ENCODE measurements at regions of chr19 and their contacts with region 1.

Region 1: DNA sequence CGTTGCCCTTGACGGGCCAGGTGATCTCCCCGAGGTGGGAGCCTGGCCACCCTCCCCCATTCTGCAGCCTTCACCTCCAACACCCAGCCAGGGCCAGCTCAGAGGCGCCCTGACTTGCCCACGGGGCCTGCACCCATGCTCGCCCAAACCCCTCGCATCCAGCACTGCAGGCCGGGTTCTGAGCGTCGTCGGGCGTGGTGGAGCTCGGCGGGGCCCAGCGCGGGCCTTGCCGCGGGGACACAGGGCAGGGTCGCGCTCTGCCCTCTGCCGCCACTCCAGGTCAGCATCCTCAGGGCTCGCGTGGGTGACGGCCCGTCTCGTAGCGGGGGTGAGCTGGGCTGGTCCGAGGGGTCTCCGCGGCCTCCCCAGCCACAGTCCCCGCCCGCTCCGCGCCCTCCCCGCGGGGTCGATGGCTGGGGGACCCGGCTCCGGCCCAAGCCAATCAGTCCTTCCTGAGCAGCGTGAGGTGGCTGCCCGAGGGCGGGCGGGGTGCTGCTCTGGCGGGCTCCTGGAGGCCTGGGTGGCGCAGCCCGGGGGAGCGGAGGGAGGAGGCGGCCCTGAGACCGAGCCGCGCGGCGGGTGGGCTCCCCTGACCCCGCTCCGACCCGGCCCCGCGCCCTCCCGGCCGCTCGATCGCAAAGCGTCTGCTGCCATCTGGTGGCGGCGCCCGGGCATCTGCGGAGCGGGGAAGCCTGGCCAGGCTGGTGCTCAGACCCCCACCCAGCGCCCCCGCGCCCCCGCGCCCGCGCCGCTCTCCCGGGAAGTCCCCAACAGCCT is 61.4 kb downstream of the CCNE1 start:
- DNase-seq: peak in 34 of 35 experiments; percentile 20 to 81 (median 56)
- ATAC-seq: peak; percentile 80 to 91 (median 84)
- H3K4me3 ChIP-seq: peak overlapping the region in 1 of 2 donors; percentile 51
- H3K4me3 Mint-ChIP-seq: peak overlapping the region; percentile 62 to 70 (median 63)
- H3K27ac ChIP-seq: no peak overlapping the region
- H3K27ac Mint-ChIP-seq: no peak overlapping the region
- H3K4me1 ChIP-seq: peaks cover 0 to 21% of the 10 kb centered on the region in 2 experiments
- H3K4me1 Mint-ChIP-seq: peaks cover 7 to 18% (median 16%) of the 10 kb centered on the region in 3 donors
- H3K27me3 ChIP-seq: peaks cover 2 to 41% of the 10 kb centered on the region in 2 experiments
- H3K27me3 Mint-ChIP-seq: peaks cover 7 to 26% of the 10 kb centered on the region in 2 donors

Region 2: DNA sequence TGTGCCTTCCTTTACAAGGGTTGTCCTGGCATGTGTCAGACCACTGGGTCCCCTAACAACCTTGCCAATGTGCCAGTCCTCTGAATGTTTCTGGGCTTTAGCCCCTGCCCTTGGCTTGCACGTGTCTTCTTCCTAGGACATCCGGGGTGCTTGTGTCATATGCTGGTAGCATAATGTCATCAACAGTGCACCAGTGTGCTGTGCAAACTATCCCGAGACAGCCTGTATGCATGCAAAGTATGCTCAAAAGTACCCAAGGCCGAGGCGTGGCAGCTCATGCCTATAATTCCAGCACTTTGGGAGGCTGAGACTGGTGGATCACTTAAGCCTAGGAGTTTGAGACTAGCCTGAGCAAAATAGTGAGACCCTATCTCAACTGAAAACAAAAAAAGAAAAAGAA is 137.4 kb before region 1 on chr19:
- CTCF ChIA-PET with region 1: interaction called, 11 to 20 read pairs
- POLR2A ChIA-PET with region 1: no interaction called
- DNase-seq: no peak
- ATAC-seq: no peak
- H3K4me3 ChIP-seq: no peak overlapping the region
- H3K4me3 Mint-ChIP-seq: no peak overlapping the region
- H3K27ac ChIP-seq: no peak overlapping the region
- H3K27ac Mint-ChIP-seq: no peak overlapping the region
- H3K4me1 ChIP-seq: no peaks in the 10 kb centered on the region
- H3K4me1 Mint-ChIP-seq: no peaks in the 10 kb centered on the region
- H3K27me3 ChIP-seq: peaks cover 0 to 42% of the 10 kb centered on the region in 2 experiments
- H3K27me3 Mint-ChIP-seq: peaks cover 0 to 16% of the 10 kb centered on the region in 2 donors

Region 3: DNA sequence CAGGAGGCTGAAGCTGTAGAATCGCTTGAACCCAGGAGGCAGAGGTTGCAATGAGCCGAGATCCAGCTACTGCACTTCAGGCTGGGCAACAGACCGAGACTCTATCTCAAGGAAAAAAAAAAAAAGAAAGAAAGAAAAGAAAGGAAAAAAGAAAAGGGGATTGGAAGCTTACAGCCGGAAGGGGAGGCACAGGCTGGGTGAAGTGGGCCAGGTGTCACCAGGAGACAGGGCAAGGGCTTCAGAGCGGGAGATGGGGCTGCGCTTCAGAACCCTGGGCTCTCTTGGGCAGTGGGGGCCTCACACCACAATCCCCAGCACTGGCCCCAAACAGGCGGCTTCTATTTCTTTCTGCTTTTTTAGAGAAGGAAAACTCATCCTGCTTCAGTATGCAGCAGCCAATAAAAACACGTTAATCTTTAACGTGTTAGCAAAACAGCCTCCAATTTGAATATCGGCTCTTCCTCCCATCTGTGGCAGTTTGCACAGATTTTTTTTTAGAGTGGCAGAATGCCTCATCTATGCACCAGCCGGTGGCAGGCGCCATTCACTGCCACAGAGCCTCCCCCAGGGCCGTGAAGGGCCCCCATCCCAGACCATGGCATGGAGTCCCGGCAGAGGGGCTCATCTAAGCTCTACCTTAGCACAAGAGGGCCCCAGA is 111.5 kb before region 1 on chr19:
- CTCF ChIA-PET with region 1: interaction called in 1 of 2 experiments, 20 read pairs
- POLR2A ChIA-PET with region 1: no interaction called
- DNase-seq: no peak
- ATAC-seq: no peak
- H3K4me3 ChIP-seq: no peak overlapping the region
- H3K4me3 Mint-ChIP-seq: no peak overlapping the region
- H3K27ac ChIP-seq: no peak overlapping the region
- H3K27ac Mint-ChIP-seq: no peak overlapping the region
- H3K4me1 ChIP-seq: peaks cover 0 to 7% of the 10 kb centered on the region in 2 experiments
- H3K4me1 Mint-ChIP-seq: peaks cover 0 to 2% (median 0%) of the 10 kb centered on the region in 3 donors
- H3K27me3 ChIP-seq: peaks cover 0 to 33% of the 10 kb centered on the region in 2 experiments
- H3K27me3 Mint-ChIP-seq: peaks cover 0 to 3% of the 10 kb centered on the region in 2 donors

Region 4: GRCh38 chr19:29837996-29838395 is 35.2 kb before region 1 on chr19:
- CTCF ChIA-PET with region 1: no interaction called
- POLR2A ChIA-PET with region 1: interaction called in 1 of 2 experiments, 10 read pairs
- DNase-seq: no peak
- ATAC-seq: no peak
- H3K4me3 ChIP-seq: no peak overlapping the region
- H3K4me3 Mint-ChIP-seq: peak overlapping the region in 1 of 3 donors; percentile 71
- H3K27ac ChIP-seq: peak overlapping the region; percentile 66
- H3K27ac Mint-ChIP-seq: peak overlapping the region; percentile 96
- H3K4me1 ChIP-seq: peaks cover 11 to 30% of the 10 kb centered on the region in 2 experiments
- H3K4me1 Mint-ChIP-seq: peaks cover 42 to 51% (median 46%) of the 10 kb centered on the region in 3 donors
- H3K27me3 ChIP-seq: peaks cover 0 to 16% of the 10 kb centered on the region in 2 experiments
- H3K27me3 Mint-ChIP-seq: no peaks in the 10 kb centered on the region

Measured in T-cell (primary cell).